Endothelial cell of umbilical vein (primary cell): ENCODE measurements at regions of chr1 and their contacts with region 1.

Region 1: GRCh38 chr1:246931549-246932365 is at the start of gene AHCTF1:
- DNase-seq: peak; percentile 99
- H3K4me3 ChIP-seq: peak within 1 kb of the TSS; percentile 91 to 95 (median 95)
- H3K27ac ChIP-seq: peak within 1 kb of the TSS; percentile 74
- H3K4me1 ChIP-seq: peaks cover 8% of the 10 kb centered on the region
- H3K27me3 ChIP-seq: no peaks in the 10 kb centered on the region
- CTCF ChIP-seq: no peak
- POLR2A ChIP-seq: peak; percentile 98
- total RNA-seq, gene AHCTF1: 30.7 and 32.1 TPM in 2 replicates

Region 2: GRCh38 chr1:246947255-246947654 is 15.5 kb after region 1 on chr1:
- CTCF ChIA-PET with region 1: interaction called, 4 read pairs
- POLR2A ChIA-PET with region 1: interaction called, 3 read pairs
- dilution Hi-C with region 1: no loop called
- intact Hi-C with region 1: loop called (anchors 1 kb)
- DNase-seq: peak; percentile 87
- H3K4me3 ChIP-seq: no peak overlapping the region
- H3K27ac ChIP-seq: peak overlapping the region; percentile 58
- H3K4me1 ChIP-seq: peaks cover 6% of the 10 kb centered on the region
- H3K27me3 ChIP-seq: no peaks in the 10 kb centered on the region
- CTCF ChIP-seq: no peak
- POLR2A ChIP-seq: no peak

Region 3: DNA sequence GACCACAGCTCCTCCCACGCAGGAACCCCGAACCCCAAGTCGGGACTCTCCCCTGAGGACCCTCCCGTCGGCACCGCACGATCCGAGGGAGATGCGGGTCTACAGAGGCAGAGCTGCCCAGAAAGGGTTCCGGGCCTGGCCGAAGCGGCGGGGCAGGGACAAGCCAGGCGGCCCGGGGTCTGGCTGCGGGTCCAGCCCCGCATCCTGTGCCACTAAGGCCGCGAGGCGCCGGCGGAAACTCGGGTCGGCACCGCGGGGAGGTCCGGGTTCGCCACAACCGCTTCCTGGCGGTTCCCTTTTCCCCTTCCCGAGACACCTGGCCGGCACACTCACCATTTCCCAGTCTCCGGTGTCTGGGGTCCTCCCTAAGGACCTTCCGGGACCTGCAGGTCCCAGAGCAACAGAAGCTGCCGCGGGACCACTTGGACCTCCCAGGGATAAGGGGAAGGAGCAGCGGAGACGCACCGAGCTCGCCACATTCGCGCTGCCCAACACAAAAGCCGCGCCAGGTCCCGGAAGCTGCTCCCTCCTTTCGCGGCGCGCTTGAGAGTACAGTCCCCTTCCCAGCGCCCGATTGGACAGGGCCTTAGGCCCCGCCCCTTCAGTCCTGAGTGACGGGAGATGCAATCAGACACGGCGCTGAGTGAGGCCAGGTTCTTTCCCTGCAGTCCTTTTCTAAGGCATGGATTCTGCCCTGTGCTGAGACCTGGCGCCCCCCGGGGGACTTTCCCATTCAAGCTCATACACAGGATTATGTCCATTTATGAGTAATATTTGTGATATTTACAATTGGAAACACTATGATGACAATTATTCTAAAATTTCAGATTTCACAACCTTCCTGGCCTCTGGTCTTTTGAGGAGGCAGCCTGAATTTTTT is 146.7 kb after region 1 on chr1 and contains the start of gene ZNF670:
- CTCF ChIA-PET with region 1: no interaction called
- POLR2A ChIA-PET with region 1: no interaction called
- dilution Hi-C with region 1: no loop called
- intact Hi-C with region 1: loop called (anchors 1 kb)
- DNase-seq: peak; percentile 96
- H3K4me3 ChIP-seq: peak within 1 kb of the TSS; percentile 72 to 90 (median 82)
- H3K27ac ChIP-seq: peak within 1 kb of the TSS; percentile 79
- H3K4me1 ChIP-seq: peaks cover 16% of the 10 kb centered on the region
- H3K27me3 ChIP-seq: no peaks in the 10 kb centered on the region
- CTCF ChIP-seq: peak in 1 of 2 donors; percentile 7
- POLR2A ChIP-seq: peak; percentile 79
- total RNA-seq, gene ZNF670: 5.1 and 5.2 TPM in 2 replicates

Region 4: DNA sequence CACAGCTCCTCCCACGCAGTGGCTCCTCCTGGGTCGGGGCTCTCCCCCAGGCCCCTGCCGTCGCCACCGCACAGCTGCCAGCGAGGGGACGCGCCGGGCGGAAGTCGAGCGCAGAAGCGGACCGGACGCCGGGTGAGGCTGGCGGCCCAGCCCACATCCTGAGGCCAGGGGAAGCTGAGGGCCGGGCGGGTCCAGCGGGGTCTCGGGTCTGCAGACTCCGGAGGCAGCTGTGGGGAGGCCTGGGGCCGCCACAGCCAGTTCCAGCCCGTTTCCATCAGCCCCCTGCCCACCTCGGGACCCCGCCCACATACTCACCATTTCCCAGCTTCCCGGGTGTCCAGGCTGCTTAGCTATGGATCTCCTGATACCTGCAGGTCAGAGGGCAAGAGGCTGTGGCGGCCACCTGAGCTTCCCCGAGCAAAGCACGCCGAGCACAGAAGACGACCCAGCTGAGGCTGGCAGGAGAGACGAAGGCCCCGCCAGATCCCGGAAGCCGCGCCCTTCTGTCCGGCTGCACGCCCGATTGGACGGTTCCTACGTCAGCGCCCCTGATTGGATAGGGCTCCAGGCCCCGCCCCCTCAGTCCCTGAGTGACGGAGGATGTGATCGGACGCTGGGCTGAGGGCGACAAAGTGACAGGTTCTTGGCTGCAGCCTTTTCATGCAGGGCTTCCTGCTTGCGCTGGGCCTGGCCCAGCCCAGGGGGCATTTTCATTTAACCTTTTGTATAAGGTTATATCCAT is 278.8 kb after region 1 on chr1:
- CTCF ChIA-PET with region 1: no interaction called
- POLR2A ChIA-PET with region 1: no interaction called
- dilution Hi-C with region 1: no loop called
- intact Hi-C with region 1: loop called (anchors 10 kb)
- DNase-seq: peak; percentile 92
- H3K4me3 ChIP-seq: peak overlapping the region; percentile 72 to 90 (median 81)
- H3K27ac ChIP-seq: peak overlapping the region; percentile 92
- H3K4me1 ChIP-seq: peaks cover 10% of the 10 kb centered on the region
- H3K27me3 ChIP-seq: peaks cover 0 to 18% of the 10 kb centered on the region in 2 experiments
- CTCF ChIP-seq: no peak
- POLR2A ChIP-seq: peak; percentile 84